ENCODE measurements at regions of chr6 and their contacts with region 1.

Region 1: DNA sequence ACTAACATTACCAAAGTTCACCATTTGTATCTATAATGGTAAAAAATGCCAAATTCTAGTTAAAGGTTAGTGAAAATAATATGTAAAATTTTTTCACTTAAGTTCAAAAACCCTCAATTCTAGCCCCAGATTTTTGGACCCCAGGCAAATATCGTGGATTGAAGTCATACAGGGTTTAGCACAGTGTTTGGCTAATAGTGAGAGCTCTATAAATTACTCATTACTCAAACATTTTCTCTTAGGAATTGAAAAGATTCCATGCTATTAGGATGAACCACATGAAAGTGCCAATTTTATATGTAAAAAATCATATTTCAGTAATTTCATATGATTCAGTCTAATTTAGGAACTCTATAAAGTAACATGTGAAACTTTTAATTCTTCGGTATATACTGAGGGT is 170.3 kb upstream of the PREP start:
- DNase-seq: no peak

Region 2: GRCh38 chr6:105824732-105825131 is 251.6 kb after region 1 on chr6:
- intact Hi-C with region 1: no loop called
- DNase-seq: no peak

Region 3: DNA sequence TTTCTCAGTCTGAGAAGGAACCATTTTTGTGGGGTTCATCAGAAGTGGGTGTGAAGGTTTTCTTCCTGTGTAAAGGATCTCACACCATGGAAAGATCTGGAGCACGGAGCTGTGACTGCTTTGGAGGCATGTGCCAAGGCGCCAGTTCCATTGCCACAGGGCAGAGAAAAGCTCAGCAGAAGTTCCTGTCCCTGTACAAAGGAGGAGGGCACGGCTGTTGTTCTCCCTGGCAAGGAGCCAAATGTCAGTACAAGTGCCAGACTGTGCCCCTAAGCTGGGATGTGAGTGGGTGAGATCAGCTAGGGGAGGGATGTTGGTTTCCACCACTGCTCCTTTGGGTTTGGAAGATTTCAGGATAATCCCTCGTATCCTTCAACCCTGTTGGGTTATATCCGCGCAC is 904.7 kb after region 1 on chr6:
- intact Hi-C with region 1: loop called in 1 of 2 experiments (anchors 5 kb)
- DNase-seq: no peak

Measured in posterior vena cava (tissue), 2 donors.